K562 (cell line): ENCODE measurements at regions of chr5 and their contacts with region 1.

Region 1: DNA sequence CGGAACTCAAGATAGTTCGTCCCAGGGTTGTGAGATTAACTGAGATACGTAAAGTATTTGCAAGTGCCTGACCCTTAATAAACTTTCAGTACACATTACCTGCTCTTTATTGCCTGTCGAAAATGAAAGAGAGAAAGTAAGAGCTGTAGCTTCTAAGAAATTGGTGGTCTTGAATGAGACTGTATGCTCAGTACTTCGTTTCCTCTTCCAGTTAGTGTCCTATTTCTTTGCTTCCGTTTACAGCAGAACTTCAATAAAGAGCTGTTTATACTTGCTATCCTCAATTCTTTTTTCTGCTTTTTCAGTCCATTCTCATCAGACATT is 534 bp downstream of the SRFBP1 start:
- DNase-seq: no peak
- ATAC-seq: peak; percentile 21
- H3K4me3 ChIP-seq: peak overlapping the region; percentile 57
- H3K27ac ChIP-seq: peak overlapping the region; percentile 85
- H3K4me1 ChIP-seq: peaks cover 0 to 3% of the 10 kb centered on the region in 2 experiments; a peak in 1 of 5 replicates
- H3K27me3 ChIP-seq: no peaks in the 10 kb centered on the region
- CTCF ChIP-seq: no peak
- EP300 ChIP-seq: no peak
- POLR2A ChIP-seq: no peak
- RAD21 ChIP-seq: no peak

Region 2: DNA sequence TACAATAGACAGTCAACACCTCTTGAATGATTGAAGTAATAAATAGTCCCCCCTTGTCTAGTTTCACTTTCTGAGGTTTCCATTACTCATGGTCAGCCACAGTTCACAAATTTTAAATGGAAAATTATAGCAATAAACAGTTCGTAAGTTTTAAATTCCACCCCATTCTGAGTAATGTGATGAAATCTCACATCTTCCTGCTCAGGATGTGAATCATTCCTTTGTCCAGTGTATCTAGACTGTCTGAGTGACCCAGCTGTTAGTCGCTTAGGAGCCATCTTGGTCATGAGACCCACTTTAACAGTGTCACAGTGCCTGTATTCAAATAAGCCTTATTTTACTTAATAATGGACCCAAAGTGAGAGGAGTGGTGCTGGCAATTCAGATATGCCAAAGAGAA is 1809.8 kb before region 1 on chr5:
- CTCF ChIA-PET with region 1: no interaction called
- POLR2A ChIA-PET with region 1: no interaction called
- in situ Hi-C with region 1: no loop called
- intact Hi-C with region 1: no loop called
- DNase-seq: peak in 1 of 4 experiments; percentile 6
- ATAC-seq: no peak
- H3K4me3 ChIP-seq: no peak overlapping the region
- H3K27ac ChIP-seq: peak overlapping the region; percentile 48; the same call in 1 of the 3 replicates
- H3K4me1 ChIP-seq: no peaks in the 10 kb centered on the region
- H3K27me3 ChIP-seq: no peaks in the 10 kb centered on the region
- CTCF ChIP-seq: no peak
- EP300 ChIP-seq: no peak
- POLR2A ChIP-seq: no peak
- RAD21 ChIP-seq: no peak

Region 3: GRCh38 chr5:121834021-121834420 is 128.3 kb before region 1 on chr5:
- CTCF ChIA-PET with region 1: no interaction called
- POLR2A ChIA-PET with region 1: no interaction called
- in situ Hi-C with region 1: no loop called
- intact Hi-C with region 1: no loop called
- DNase-seq: no peak
- ATAC-seq: no peak
- H3K4me3 ChIP-seq: no peak overlapping the region
- H3K27ac ChIP-seq: no peak overlapping the region
- H3K4me1 ChIP-seq: no peaks in the 10 kb centered on the region
- H3K27me3 ChIP-seq: no peaks in the 10 kb centered on the region
- CTCF ChIP-seq: no peak
- EP300 ChIP-seq: no peak
- POLR2A ChIP-seq: no peak
- RAD21 ChIP-seq: no peak

Region 4: DNA sequence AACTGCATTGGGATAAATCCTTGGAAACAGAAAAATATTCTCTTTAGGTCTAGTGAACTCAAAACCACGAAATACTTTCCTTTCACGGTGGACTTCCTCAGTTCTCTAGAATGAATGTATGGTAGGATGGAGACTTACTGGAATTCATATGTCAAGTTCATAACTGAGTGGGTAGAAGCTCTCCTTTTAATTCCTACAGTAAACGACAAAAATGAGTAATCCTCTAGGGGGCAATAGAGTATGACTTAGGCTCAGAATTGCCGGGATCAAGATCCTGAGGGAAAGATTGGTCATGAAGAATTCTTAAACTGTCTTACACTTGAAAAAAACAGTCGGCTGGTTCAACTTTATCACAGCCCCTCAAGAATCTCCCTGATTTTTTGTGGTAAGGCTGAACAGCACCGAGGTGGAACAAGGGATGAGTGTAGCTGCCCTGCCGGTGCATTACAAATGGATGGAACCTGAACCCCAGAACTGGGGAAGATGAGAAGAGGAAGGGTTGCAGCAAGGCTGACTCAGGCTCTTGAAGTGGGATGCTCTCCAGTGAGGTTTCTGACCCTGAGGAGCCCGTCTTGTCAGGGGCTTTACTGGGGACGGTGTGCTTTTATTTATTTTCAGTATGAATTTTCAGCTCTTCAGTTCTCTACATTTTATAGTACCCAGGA is 129.8 kb after region 1 on chr5:
- CTCF ChIA-PET with region 1: interaction called, 3 read pairs
- POLR2A ChIA-PET with region 1: no interaction called
- in situ Hi-C with region 1: no loop called
- intact Hi-C with region 1: loop called (anchors 5 kb)
- DNase-seq: peak in 2 of 4 experiments; percentile 39 to 61
- ATAC-seq: peak; percentile 81
- H3K4me3 ChIP-seq: no peak overlapping the region
- H3K27ac ChIP-seq: no peak overlapping the region
- H3K4me1 ChIP-seq: no peaks in the 10 kb centered on the region; a peak in 2 of 5 replicates
- H3K27me3 ChIP-seq: no peaks in the 10 kb centered on the region
- CTCF ChIP-seq: peak; percentile 39 to 76 (median 64); a peak in 5 of 6 replicates
- EP300 ChIP-seq: no peak
- POLR2A ChIP-seq: no peak
- RAD21 ChIP-seq: peak; percentile 49 to 81; a peak in 3 of 4 replicates

Region 5: DNA sequence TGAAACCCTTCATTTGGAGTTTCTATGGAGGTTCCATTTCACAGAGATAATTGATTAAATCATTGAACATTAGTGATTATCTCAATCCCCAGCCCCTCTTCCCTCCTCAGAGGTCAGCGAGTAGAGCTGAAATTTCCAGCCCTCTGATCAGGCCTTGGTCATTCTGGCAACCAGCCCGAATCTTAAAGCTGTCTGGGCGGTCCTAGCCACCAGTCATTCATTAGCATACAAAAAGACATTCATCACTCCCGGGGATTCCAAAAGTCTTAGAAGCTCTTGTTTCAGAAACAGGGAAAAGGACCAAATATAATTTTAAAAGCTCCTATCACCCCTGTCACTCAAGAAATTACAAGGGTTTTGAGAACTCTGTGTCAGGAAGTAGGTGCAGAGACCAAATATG is 208.3 kb after region 1 on chr5:
- CTCF ChIA-PET with region 1: no interaction called
- POLR2A ChIA-PET with region 1: no interaction called
- in situ Hi-C with region 1: no loop called
- intact Hi-C with region 1: loop called (anchors 5 kb)
- DNase-seq: peak in 2 of 4 experiments; percentile 41 to 65
- ATAC-seq: peak; percentile 88
- H3K4me3 ChIP-seq: no peak overlapping the region
- H3K27ac ChIP-seq: no peak overlapping the region
- H3K4me1 ChIP-seq: peaks cover 4 to 10% of the 10 kb centered on the region in 2 experiments; a peak in 3 of 5 replicates
- H3K27me3 ChIP-seq: no peaks in the 10 kb centered on the region
- CTCF ChIP-seq: no peak
- EP300 ChIP-seq: no peak
- POLR2A ChIP-seq: no peak
- RAD21 ChIP-seq: no peak